MCF 10A (cell line): ENCODE measurements at regions of chr10 and their contacts with region 1.

Region 1: GRCh38 chr10:110600487-110601101 is 33.1 kb downstream of the SMC3 start:
- DNase-seq: peak; percentile 69
- H3K4me3 Mint-ChIP-seq: no peak overlapping the region
- H3K27ac Mint-ChIP-seq: no peak overlapping the region
- H3K4me1 Mint-ChIP-seq: no peaks in the 10 kb centered on the region
- H3K27me3 Mint-ChIP-seq: no peaks in the 10 kb centered on the region
- CTCF ChIP-seq: peak; percentile 46

Region 2: GRCh38 chr10:110304780-110305421 is 295.7 kb before region 1 on chr10 and contains the start of gene SMNDC1:
- CTCF ChIA-PET with region 1: interaction called, 87 read pairs
- POLR2A ChIA-PET with region 1: interaction called, 27 read pairs
- intact Hi-C with region 1: loop called (anchors 1 kb)
- DNase-seq: peak; percentile 98
- H3K4me3 Mint-ChIP-seq: peak within 1 kb of the TSS; percentile 94
- H3K27ac Mint-ChIP-seq: peak within 1 kb of the TSS; percentile 95
- H3K4me1 Mint-ChIP-seq: peaks cover 10% of the 10 kb centered on the region
- H3K27me3 Mint-ChIP-seq: no peaks in the 10 kb centered on the region
- CTCF ChIP-seq: no peak
- total RNA-seq, gene SMNDC1: 46.6 and 48.2 TPM in 2 replicates

Region 3: GRCh38 chr10:110311357-110311949 is 289.1 kb before region 1 on chr10:
- CTCF ChIA-PET with region 1: interaction called, 87 read pairs
- POLR2A ChIA-PET with region 1: interaction called, 27 read pairs
- intact Hi-C with region 1: loop called (anchors 1 kb)
- DNase-seq: peak; percentile 77
- H3K4me3 Mint-ChIP-seq: no peak overlapping the region
- H3K27ac Mint-ChIP-seq: no peak overlapping the region
- H3K4me1 Mint-ChIP-seq: no peaks in the 10 kb centered on the region
- H3K27me3 Mint-ChIP-seq: no peaks in the 10 kb centered on the region
- CTCF ChIP-seq: peak; percentile 69

Region 4: GRCh38 chr10:110556969-110557601 is 43.5 kb before region 1 on chr10:
- CTCF ChIA-PET with region 1: no interaction called
- POLR2A ChIA-PET with region 1: no interaction called
- intact Hi-C with region 1: no loop called
- DNase-seq: peak; percentile 27
- H3K4me3 Mint-ChIP-seq: no peak overlapping the region
- H3K27ac Mint-ChIP-seq: no peak overlapping the region
- H3K4me1 Mint-ChIP-seq: peaks cover 4% of the 10 kb centered on the region
- H3K27me3 Mint-ChIP-seq: no peaks in the 10 kb centered on the region
- CTCF ChIP-seq: peak; percentile 19

Region 5: GRCh38 chr10:110584006-110584405 is 16.6 kb before region 1 on chr10:
- CTCF ChIA-PET with region 1: interaction called, 11 read pairs
- POLR2A ChIA-PET with region 1: interaction called, 6 read pairs
- intact Hi-C with region 1: no loop called
- DNase-seq: no peak
- H3K4me3 Mint-ChIP-seq: no peak overlapping the region
- H3K27ac Mint-ChIP-seq: no peak overlapping the region
- H3K4me1 Mint-ChIP-seq: no peaks in the 10 kb centered on the region
- H3K27me3 Mint-ChIP-seq: no peaks in the 10 kb centered on the region
- CTCF ChIP-seq: no peak